Left ventricle myocardium inferior (tissue), 1 donor: ENCODE measurements at regions of chr16 and their contacts with region 1.

Region 1: DNA sequence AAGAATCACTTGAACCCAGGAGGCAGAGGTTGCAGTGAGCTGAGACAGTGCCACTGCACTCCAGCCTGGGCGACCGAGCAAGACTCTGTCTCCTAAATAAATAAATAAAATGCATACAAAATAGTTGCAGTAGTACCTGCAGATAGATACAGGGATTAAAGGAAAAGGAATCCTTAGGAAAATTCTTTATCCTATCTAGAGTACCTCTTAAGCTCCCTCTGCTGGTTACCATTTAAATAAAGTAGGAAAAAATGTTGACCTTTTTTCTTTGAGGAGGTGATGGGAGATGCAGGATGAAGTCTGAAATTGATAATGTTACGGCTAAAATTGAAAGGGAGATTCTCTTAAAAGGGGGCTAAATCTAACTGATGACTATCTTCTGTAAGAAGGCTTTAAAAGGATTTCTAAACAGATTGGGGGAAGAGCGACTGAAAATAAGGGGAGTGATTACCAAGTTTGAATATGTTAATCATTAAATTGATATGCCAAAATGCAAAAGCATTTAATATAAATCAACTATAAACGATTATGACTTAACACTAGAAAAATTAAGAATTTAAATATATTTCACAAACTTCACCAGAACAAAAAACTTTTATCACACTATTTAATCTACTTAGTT is 29.4 kb downstream of the C16orf87 start:
- DNase-seq: no peak
- H3K4me3 ChIP-seq: no peak overlapping the region
- H3K27ac ChIP-seq: no peak overlapping the region
- H3K4me1 ChIP-seq: no peaks in the 10 kb centered on the region
- H3K27me3 ChIP-seq: no peaks in the 10 kb centered on the region
- CTCF ChIP-seq: peak; percentile 57

Region 2: GRCh38 chr16:46512960-46513359 is 288.6 kb before region 1 on chr16:
- intact Hi-C with region 1: no loop called
- DNase-seq: no peak
- H3K4me3 ChIP-seq: no peak overlapping the region
- H3K27ac ChIP-seq: no peak overlapping the region
- H3K4me1 ChIP-seq: no peaks in the 10 kb centered on the region
- H3K27me3 ChIP-seq: no peaks in the 10 kb centered on the region
- CTCF ChIP-seq: no peak

Region 3: DNA sequence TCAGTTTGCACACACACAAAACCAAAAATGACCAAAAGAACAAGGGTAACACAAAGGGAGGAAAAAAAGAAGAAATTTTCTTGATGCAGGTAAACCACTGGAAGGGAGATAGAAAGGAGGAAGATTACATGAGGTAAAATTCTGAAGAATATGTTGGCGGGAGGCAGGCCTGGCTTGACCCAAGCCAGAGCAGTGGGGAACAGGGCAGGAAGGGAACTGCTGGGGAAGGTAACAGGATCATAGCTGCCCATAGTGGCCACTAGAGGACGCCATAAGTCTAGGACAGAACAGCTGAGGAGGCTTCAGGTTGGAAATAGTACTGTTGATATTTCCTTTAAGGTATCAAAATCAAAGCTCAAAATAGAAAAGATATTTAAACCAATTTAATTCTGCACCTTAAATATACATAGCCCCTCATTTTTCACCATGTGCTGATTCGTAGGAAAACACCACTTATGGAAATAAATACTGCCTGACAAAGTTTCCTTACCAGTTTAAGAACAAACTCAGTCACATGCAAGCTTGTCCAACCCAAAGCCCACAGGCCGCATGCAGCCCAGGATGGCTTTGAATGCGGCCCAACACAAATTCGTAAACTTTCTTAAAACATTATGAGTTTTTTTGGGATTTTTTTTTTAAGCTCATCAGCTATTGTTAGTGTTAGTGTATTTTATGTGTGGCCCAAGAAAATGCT is 128.1 kb before region 1 on chr16:
- intact Hi-C with region 1: loop called (anchors 10 kb)
- DNase-seq: no peak
- H3K4me3 ChIP-seq: no peak overlapping the region
- H3K27ac ChIP-seq: no peak overlapping the region
- H3K4me1 ChIP-seq: no peaks in the 10 kb centered on the region
- H3K27me3 ChIP-seq: no peaks in the 10 kb centered on the region
- CTCF ChIP-seq: peak; percentile 94

Region 4: DNA sequence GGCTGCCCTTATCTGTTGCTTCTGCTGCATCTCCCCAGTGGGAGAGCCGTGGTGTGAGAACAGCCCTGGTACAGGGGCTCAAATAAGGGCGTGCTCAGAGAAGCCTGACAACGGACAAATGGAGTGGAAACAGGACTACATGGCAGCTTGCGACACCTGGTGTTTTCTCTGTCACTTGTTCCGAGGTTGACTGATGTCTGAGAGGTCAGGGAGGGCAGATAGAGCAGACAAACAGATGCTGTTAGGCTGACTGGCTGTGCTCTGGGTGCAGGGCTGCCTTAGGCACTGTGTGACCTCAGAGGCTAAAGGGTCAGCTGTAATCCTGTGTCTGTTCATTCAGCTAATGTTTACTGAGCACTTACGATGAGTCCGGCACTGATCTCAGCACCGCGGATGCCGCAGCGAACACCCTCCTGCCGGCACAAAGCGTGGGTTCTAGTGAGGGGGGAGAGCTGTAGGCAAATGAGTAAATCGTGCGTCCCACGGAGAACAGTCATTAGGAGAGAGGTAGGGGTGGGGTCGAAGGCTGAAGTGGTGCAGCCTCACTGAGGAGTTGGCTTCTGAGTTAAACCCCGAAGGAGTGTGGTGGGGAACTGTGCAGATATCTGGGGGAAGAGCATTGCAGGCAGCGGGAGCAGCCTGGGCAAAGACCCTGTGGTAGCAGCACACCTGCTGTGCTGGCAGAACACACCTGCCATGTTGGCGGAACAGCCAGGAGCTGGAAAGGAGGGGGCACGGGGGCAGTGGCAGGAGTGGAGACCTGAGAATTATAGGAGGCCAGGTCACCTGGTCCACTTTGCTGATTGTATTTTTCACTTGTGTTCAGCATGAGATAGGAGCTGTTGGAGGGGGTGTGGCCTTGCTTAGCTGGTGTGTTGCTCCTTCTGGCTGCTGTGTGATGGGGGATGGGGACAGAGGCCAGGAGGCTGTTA is 117.6 kb after region 1 on chr16:
- intact Hi-C with region 1: no loop called
- DNase-seq: no peak
- H3K4me3 ChIP-seq: no peak overlapping the region
- H3K27ac ChIP-seq: no peak overlapping the region
- H3K4me1 ChIP-seq: no peaks in the 10 kb centered on the region
- H3K27me3 ChIP-seq: no peaks in the 10 kb centered on the region
- CTCF ChIP-seq: no peak